Activated naive CD8-positive, alpha-beta T cell treated with anti-CD3 and anti-CD28 coated beads, Interleukin-2, amount 10 ng/mL, durations not matched to agents 7 days and 5 days (primary cell): ENCODE measurements at regions of chr3 and their contacts with region 1.

Region 1: GRCh38 chr3:14377348-14378169 is 24.8 kb upstream of the SLC6A6 start:
- DNase-seq: peak; percentile 60
- ATAC-seq: peak; percentile 98
- H3K4me3 Mint-ChIP-seq: peak overlapping the region; percentile 58
- H3K27ac Mint-ChIP-seq: peak overlapping the region; percentile 87
- H3K4me1 Mint-ChIP-seq: peaks cover 27% of the 10 kb centered on the region
- H3K27me3 Mint-ChIP-seq: peaks cover 5% of the 10 kb centered on the region

Region 2: GRCh38 chr3:14431892-14432834 is 54.6 kb after region 1 on chr3:
- POLR2A ChIA-PET with region 1: interaction called, 10 read pairs
- DNase-seq: peak; percentile 89
- ATAC-seq: peak; percentile 95
- H3K4me3 Mint-ChIP-seq: peak overlapping the region; percentile 87
- H3K27ac Mint-ChIP-seq: peak overlapping the region; percentile 99
- H3K4me1 Mint-ChIP-seq: peaks cover 71% of the 10 kb centered on the region
- H3K27me3 Mint-ChIP-seq: no peaks in the 10 kb centered on the region